Naive thymus-derived CD8-positive, alpha-beta T cell (primary cell): ENCODE measurements at regions of chrX and their contacts with region 1.

Region 1: GRCh38 chrX:47581731-47582647 is at the start of gene TIMP1:
- DNase-seq: peak; percentile 31 to 84 (median 54)
- ATAC-seq: peak; percentile 94 to 96
- H3K4me3 Mint-ChIP-seq: peak within 1 kb of the TSS; percentile 52 to 88 (median 79)
- H3K27ac Mint-ChIP-seq: peak within 1 kb of the TSS; percentile 55 to 94 (median 86)
- H3K4me1 Mint-ChIP-seq: peaks cover 15 to 30% (median 25%) of the 10 kb centered on the region in 4 donors
- H3K27me3 Mint-ChIP-seq: peaks cover 0 to 3% (median 0%) of the 10 kb centered on the region in 5 donors
- polyA plus RNA-seq, gene TIMP1: 49.9 to 75.5 (median 59.6) TPM

Region 2: DNA sequence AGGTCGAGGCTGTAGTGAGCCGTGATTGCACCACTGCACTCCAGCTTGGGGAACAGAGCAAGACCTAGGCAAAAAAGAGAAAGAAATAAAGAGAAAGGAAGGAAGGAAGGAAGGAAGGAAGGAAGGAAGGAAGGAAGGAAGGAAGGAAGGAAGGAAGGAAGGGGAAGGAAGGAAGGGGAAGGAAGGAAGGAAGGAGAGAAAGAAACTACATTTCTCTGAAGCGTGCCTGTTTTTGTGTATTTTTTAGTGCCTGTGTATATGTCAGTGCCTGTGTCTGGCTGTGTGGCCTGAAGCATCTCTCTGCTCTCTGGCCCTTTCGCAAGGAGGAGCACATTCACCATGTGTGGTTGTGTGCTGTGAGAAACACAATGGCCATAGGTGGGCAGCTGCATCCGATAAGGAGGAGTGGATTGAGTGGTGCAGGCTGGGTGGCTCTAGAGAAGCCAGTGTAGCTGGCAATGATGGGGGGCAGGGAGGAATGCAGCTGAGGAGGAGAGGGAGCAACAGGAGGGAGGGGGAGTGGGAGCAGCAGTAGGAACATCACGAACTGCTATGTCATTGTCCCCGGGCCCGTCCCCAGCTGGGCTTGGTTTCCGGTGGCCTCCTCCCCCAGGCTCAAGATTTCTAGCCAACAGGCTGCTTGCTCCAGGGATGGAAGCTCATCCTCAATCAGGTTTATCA is 26.3 kb after region 1 on chrX:
- POLR2A ChIA-PET with region 1: interaction called, 12 read pairs
- DNase-seq: no peak
- ATAC-seq: no peak
- H3K4me3 Mint-ChIP-seq: no peak overlapping the region
- H3K27ac Mint-ChIP-seq: peak overlapping the region in 1 of 10 donors; percentile 49
- H3K4me1 Mint-ChIP-seq: peaks cover 3 to 9% (median 4%) of the 10 kb centered on the region in 4 donors
- H3K27me3 Mint-ChIP-seq: no peaks in the 10 kb centered on the region

Region 3: GRCh38 chrX:47623540-47624027 is 41.6 kb after region 1 on chrX:
- POLR2A ChIA-PET with region 1: interaction called, 13 read pairs
- DNase-seq: peak in 9 of 10 donors; percentile 23 to 76 (median 50)
- ATAC-seq: peak; percentile 72 to 80
- H3K4me3 Mint-ChIP-seq: peak overlapping the region; percentile 79 to 92 (median 88)
- H3K27ac Mint-ChIP-seq: peak overlapping the region in 6 of 10 donors; percentile 19 to 82 (median 50)
- H3K4me1 Mint-ChIP-seq: peaks cover 7 to 34% (median 22%) of the 10 kb centered on the region in 4 donors
- H3K27me3 Mint-ChIP-seq: peaks cover 0 to 2% (median 0%) of the 10 kb centered on the region in 5 donors